ENCODE measurements at regions of chr4 and their contacts with region 1.

Region 1: GRCh38 chr4:77156533-77156911 is 485 bp upstream of the CCNG2 start:
- DNase-seq: peak in 8 of 9 experiments; percentile 91 to 99 (median 97)
- ATAC-seq: peak; percentile 93
- H3K4me3 ChIP-seq: peak overlapping the region; percentile 83 to 93
- H3K4me3 Mint-ChIP-seq: peak overlapping the region; percentile 100
- H3K27ac ChIP-seq: peak overlapping the region; percentile 62 to 79
- H3K27ac Mint-ChIP-seq: peak overlapping the region; percentile 99
- H3K4me1 ChIP-seq: peaks cover 21% of the 10 kb centered on the region
- H3K4me1 Mint-ChIP-seq: peaks cover 39% of the 10 kb centered on the region
- H3K27me3 ChIP-seq: no peaks in the 10 kb centered on the region
- H3K27me3 Mint-ChIP-seq: no peaks in the 10 kb centered on the region
- CTCF ChIP-seq: no peak

Region 2: GRCh38 chr4:75630174-75630936 is 1526.2 kb before region 1 on chr4 and contains the start of gene CDKL2:
- CTCF ChIA-PET with region 1: no interaction called
- POLR2A ChIA-PET with region 1: no interaction called
- intact Hi-C with region 1: loop called in 1 of 2 experiments (anchors 10 kb)
- DNase-seq: peak; percentile 85 to 96 (median 95)
- ATAC-seq: peak; percentile 99
- H3K4me3 ChIP-seq: peak within 1 kb of the TSS; percentile 74 to 82
- H3K4me3 Mint-ChIP-seq: peak within 1 kb of the TSS; percentile 91
- H3K27ac ChIP-seq: peak within 1 kb of the TSS; percentile 51 to 56
- H3K27ac Mint-ChIP-seq: peak within 1 kb of the TSS; percentile 84
- H3K4me1 ChIP-seq: peaks cover 6% of the 10 kb centered on the region
- H3K4me1 Mint-ChIP-seq: peaks cover 15% of the 10 kb centered on the region
- H3K27me3 ChIP-seq: no peaks in the 10 kb centered on the region
- H3K27me3 Mint-ChIP-seq: no peaks in the 10 kb centered on the region
- CTCF ChIP-seq: no peak
- total RNA-seq, gene CDKL2: 0.89 to 1.4 TPM

Region 3: DNA sequence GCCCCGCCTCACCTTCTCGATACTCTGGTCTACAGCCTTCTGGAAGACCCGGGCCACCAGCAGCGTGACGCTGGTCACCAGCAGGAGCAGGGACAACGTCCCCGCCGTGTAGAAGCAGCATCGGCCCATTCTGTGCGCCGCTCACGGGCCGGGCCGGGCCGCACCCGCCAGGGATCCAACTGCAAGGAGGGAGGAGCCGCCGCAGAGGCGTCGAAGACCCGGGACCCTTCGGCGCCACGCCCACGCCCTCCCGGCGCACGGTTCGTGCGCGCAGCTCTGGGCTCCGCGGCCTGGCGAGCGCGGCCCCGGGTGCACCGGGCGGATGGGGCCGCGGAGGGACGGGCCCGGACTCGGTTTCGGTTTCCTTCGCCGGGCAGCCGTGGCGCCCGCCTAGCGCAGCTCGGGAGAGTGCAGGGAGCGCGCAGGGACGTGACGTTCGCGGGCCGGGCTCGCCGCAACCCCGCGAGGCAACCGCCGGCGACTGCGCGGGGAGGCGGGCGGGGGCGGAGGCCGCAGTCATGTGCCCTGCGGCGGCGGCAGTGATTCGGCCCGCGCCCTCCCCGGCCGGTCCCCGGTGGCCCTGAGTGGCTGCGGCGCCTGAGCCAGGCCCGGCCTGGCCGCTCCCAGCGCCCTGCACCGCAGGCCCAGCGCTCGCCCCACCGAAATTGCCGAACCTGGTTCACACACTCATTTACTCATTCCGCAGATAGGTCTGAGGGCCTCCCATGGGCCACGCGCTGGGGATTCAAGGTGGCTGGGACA is 942.9 kb before region 1 on chr4 and contains the start of gene SCARB2:
- CTCF ChIA-PET with region 1: no interaction called
- POLR2A ChIA-PET with region 1: no interaction called
- intact Hi-C with region 1: loop called (anchors 5 kb)
- DNase-seq: peak; percentile 44 to 91 (median 73)
- ATAC-seq: peak; percentile 64
- H3K4me3 ChIP-seq: peak within 1 kb of the TSS; percentile 71 to 75
- H3K4me3 Mint-ChIP-seq: peak within 1 kb of the TSS; percentile 89
- H3K27ac ChIP-seq: peak within 1 kb of the TSS; percentile 85
- H3K27ac Mint-ChIP-seq: peak within 1 kb of the TSS; percentile 95
- H3K4me1 ChIP-seq: peaks cover 29% of the 10 kb centered on the region
- H3K4me1 Mint-ChIP-seq: peaks cover 59% of the 10 kb centered on the region
- H3K27me3 ChIP-seq: no peaks in the 10 kb centered on the region
- H3K27me3 Mint-ChIP-seq: no peaks in the 10 kb centered on the region
- CTCF ChIP-seq: no peak
- total RNA-seq, gene SCARB2: 33.3 to 34.4 TPM

Region 4: DNA sequence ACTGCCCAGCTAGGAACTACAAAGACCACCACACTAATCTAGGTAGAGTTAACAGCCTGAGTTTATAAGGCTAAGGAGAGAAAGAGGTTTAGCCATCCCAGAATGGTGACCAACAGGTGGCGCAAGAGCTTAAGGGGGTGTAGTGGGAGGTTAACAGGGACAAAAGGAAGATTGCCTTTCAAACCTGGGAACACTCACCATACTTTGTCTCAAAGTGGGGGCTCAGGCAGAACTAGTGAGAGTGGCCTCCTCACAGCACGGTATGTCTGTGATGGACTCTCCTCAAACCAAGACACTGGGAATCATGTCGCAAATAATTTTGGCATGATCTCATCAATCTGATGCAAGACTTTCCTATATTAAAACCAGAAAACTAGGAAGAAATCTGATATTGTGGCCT is 104.2 kb before region 1 on chr4:
- CTCF ChIA-PET with region 1: interaction called, 3 read pairs
- POLR2A ChIA-PET with region 1: no interaction called
- intact Hi-C with region 1: loop called in 1 of 2 experiments (anchors 5 kb)
- DNase-seq: peak; percentile 30 to 75 (median 69)
- ATAC-seq: peak; percentile 52
- H3K4me3 ChIP-seq: no peak overlapping the region
- H3K4me3 Mint-ChIP-seq: no peak overlapping the region
- H3K27ac ChIP-seq: no peak overlapping the region
- H3K27ac Mint-ChIP-seq: no peak overlapping the region
- H3K4me1 ChIP-seq: no peaks in the 10 kb centered on the region
- H3K4me1 Mint-ChIP-seq: peaks cover 7% of the 10 kb centered on the region
- H3K27me3 ChIP-seq: no peaks in the 10 kb centered on the region
- H3K27me3 Mint-ChIP-seq: no peaks in the 10 kb centered on the region
- CTCF ChIP-seq: peak; percentile 45

Region 5: DNA sequence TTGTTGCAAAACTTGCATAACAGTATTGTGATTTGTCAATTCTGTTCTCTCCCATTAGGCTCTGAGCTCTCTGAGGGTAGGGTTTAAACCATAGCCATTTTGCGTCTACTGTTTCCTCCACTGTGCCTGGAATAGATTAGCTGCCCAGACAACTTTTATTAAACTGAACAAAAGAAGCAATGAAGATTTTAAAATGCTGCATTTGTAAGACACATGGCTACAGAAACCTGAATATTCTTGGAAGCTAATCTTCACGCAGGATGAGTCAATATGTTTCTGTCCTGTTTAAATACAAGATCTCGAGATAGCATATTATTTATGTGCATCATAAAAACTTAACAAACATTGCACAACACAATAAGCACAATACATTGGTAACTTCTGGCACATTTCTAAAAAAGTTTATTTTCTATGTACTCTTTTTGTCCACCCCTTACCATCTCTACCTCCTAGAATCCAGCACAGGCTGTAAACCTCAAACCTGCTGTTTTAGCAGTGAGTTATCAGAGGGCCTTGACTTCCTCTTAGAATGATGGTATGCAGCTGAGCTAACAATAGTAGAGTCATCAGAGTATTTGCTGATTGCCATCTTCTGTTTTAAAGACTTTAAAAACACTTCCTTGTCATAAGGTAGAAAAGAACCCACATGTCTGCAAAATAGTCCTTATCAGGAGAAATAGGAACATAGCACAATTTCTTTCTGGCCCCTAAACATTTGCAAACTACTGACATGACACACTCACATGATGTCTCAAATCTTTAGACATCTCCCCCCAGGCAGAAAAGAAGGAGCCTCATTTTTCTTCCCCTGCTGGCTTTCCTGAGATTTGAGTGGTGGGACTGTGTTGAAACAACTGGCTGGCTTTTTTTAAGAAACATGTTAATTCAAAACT is 10.1 kb before region 1 on chr4:
- CTCF ChIA-PET with region 1: no interaction called
- POLR2A ChIA-PET with region 1: interaction called, 20 read pairs
- intact Hi-C with region 1: no loop called
- DNase-seq: no peak
- ATAC-seq: no peak
- H3K4me3 ChIP-seq: no peak overlapping the region
- H3K4me3 Mint-ChIP-seq: no peak overlapping the region
- H3K27ac ChIP-seq: no peak overlapping the region
- H3K27ac Mint-ChIP-seq: peak overlapping the region; percentile 42
- H3K4me1 ChIP-seq: peaks cover 8% of the 10 kb centered on the region
- H3K4me1 Mint-ChIP-seq: peaks cover 19% of the 10 kb centered on the region
- H3K27me3 ChIP-seq: no peaks in the 10 kb centered on the region
- H3K27me3 Mint-ChIP-seq: no peaks in the 10 kb centered on the region
- CTCF ChIP-seq: no peak

Region 6: GRCh38 chr4:77183777-77184420 is 27.4 kb after region 1 on chr4:
- CTCF ChIA-PET with region 1: no interaction called
- POLR2A ChIA-PET with region 1: no interaction called
- intact Hi-C with region 1: no loop called
- DNase-seq: no peak
- ATAC-seq: no peak
- H3K4me3 ChIP-seq: no peak overlapping the region
- H3K4me3 Mint-ChIP-seq: no peak overlapping the region
- H3K27ac ChIP-seq: no peak overlapping the region
- H3K27ac Mint-ChIP-seq: no peak overlapping the region
- H3K4me1 ChIP-seq: no peaks in the 10 kb centered on the region
- H3K4me1 Mint-ChIP-seq: peaks cover 2% of the 10 kb centered on the region
- H3K27me3 ChIP-seq: no peaks in the 10 kb centered on the region
- H3K27me3 Mint-ChIP-seq: no peaks in the 10 kb centered on the region
- CTCF ChIP-seq: no peak

Region 7: DNA sequence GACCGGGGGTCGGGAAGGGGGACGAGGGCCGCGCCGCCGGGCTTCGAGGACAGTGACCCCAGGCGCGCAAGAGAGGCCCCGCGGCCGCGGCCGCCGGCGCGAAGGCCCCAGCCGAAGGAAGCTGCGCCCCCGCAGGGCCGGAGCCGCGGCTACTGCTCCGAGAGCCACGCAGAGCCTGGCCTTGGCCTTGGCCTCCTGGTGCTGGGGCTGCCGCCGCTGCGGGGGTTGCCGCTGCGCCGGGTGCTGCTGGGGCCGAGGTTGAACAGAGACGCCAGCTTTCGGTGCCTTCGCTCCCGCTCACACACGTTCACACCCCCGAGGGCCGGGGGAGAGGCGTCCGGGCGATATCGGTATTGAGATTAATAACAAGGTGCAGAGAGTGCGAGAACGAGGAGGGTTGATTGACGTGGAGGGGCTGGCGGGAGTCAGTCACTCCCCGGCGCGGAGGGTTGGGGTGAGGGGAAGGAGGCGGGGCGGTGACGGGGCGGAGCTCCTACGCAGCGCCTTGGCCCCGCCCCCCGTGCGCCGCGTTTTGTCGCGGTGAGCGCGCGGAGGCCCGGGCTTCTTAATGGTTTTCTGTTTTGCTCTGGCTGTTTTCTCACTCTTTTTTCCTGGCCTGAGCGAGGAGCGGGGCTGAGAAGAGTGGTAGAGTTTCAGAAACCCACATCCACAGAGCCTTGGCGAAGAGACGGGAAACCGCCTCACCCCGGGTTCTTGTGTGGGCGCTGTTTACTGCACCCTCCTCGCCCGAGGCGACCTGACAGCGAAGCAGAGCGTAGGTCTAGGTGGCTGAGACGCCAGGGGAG is 663.5 kb after region 1 on chr4:
- CTCF ChIA-PET with region 1: no interaction called
- POLR2A ChIA-PET with region 1: interaction called, 3 read pairs
- intact Hi-C with region 1: loop called in 1 of 2 experiments (anchors 10 kb)
- DNase-seq: peak; percentile 93 to 98 (median 96)
- ATAC-seq: peak; percentile 75
- H3K4me3 ChIP-seq: peak overlapping the region; percentile 64 to 69
- H3K4me3 Mint-ChIP-seq: peak overlapping the region; percentile 99
- H3K27ac ChIP-seq: peak overlapping the region; percentile 96 to 98
- H3K27ac Mint-ChIP-seq: peak overlapping the region; percentile 100
- H3K4me1 ChIP-seq: peaks cover 44% of the 10 kb centered on the region
- H3K4me1 Mint-ChIP-seq: peaks cover 60% of the 10 kb centered on the region
- H3K27me3 ChIP-seq: no peaks in the 10 kb centered on the region
- H3K27me3 Mint-ChIP-seq: no peaks in the 10 kb centered on the region
- CTCF ChIP-seq: no peak

Region 8: GRCh38 chr4:78784236-78784865 is 1627.8 kb after region 1 on chr4:
- CTCF ChIA-PET with region 1: no interaction called
- POLR2A ChIA-PET with region 1: no interaction called
- intact Hi-C with region 1: loop called in 1 of 2 experiments (anchors 10 kb)
- DNase-seq: no peak
- ATAC-seq: no peak
- H3K4me3 ChIP-seq: no peak overlapping the region
- H3K4me3 Mint-ChIP-seq: no peak overlapping the region
- H3K27ac ChIP-seq: no peak overlapping the region
- H3K27ac Mint-ChIP-seq: no peak overlapping the region
- H3K4me1 ChIP-seq: no peaks in the 10 kb centered on the region
- H3K4me1 Mint-ChIP-seq: peaks cover 14% of the 10 kb centered on the region
- H3K27me3 ChIP-seq: no peaks in the 10 kb centered on the region
- H3K27me3 Mint-ChIP-seq: no peaks in the 10 kb centered on the region
- CTCF ChIP-seq: no peak

Measured in CD8-positive, alpha-beta T cell (primary cell).